Calu3 (cell line): ENCODE measurements at regions of chr7 and their contacts with region 1.

Region 1: DNA sequence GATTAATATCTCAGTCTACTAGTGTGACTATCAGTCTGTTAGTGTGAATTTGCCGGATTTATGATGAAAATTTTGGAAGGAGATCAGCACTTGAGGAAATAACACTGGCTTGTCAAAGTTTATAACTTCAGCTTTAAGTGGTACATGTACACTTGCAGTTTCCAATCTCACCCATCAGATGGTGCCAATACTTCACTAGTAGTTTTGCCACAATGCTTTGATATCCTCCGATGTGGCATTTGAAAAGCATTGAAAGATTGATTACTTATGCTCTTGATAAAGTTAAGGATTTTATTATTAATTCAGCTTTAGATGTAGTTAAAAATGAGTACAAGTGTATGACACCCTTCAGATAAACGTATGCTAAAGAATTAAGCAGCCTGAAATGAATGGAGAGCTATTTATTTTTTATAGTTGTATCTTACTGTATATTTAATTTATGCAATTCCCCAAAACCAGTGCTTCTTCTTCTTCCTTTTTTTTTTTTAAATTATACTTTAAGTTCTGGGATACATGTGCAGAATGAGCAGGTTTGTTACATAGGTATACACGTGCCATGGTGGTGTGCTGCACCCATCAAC is 98.2 kb downstream of the ANLN start:
- DNase-seq: peak; percentile 58
- H3K4me3 Mint-ChIP-seq: no peak overlapping the region
- H3K27ac Mint-ChIP-seq: no peak overlapping the region
- H3K4me1 Mint-ChIP-seq: peaks cover 19% of the 10 kb centered on the region
- H3K27me3 Mint-ChIP-seq: no peaks in the 10 kb centered on the region
- CTCF ChIP-seq: peak; percentile 90

Region 2: GRCh38 chr7:36440880-36441279 is 47.0 kb before region 1 on chr7:
- CTCF ChIA-PET with region 1: interaction called, 4 read pairs
- intact Hi-C with region 1: loop called (anchors 1 kb)
- DNase-seq: no peak
- H3K4me3 Mint-ChIP-seq: no peak overlapping the region
- H3K27ac Mint-ChIP-seq: no peak overlapping the region
- H3K4me1 Mint-ChIP-seq: no peaks in the 10 kb centered on the region
- H3K27me3 Mint-ChIP-seq: no peaks in the 10 kb centered on the region
- CTCF ChIP-seq: no peak

Region 3: DNA sequence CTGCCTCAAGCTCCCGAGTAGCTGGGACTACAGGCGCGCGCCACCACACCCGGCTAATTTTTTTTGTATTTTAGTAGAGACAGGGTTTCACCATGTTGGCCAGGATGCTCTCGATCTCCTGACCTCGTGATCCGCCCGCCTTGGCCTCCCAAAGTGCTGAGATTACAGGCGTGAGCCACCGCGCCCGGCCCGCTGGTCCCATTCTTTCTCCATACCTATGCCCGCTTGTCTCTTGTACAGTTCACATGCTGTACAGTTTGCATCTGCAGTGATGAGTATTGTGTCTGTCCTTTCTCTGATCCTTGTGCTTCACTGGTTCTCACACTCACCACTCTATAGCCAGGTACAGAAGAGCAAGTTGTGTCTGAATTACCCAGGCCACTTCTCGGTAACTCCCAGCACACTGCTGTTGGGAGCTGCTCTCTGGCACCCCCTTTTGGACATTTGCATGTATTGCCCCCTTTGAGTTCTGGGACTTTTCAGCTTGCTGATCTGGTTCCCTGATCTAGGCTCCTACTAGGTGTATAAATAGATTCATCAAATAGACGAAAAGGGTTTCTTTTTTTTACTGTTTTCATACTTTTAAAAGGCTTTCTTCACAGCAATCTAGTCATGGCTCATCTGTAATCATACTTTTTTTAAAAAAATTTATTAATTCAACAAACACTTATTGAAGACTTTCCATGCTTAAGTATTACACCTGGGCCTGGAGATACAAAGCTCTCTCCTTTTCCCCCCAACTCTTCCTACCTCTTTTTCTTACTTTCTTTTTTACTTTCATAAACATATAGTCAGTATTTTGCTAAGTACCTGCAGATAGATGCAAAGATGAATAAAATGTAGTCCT is 183.0 kb after region 1 on chr7:
- CTCF ChIA-PET with region 1: interaction called, 31 read pairs
- intact Hi-C with region 1: loop called (anchors 1 kb)
- DNase-seq: peak; percentile 83
- H3K4me3 Mint-ChIP-seq: no peak overlapping the region
- H3K27ac Mint-ChIP-seq: no peak overlapping the region
- H3K4me1 Mint-ChIP-seq: peaks cover 26% of the 10 kb centered on the region
- H3K27me3 Mint-ChIP-seq: no peaks in the 10 kb centered on the region
- CTCF ChIP-seq: peak; percentile 94

Region 4: GRCh38 chr7:36881233-36881874 is 393.5 kb after region 1 on chr7:
- CTCF ChIA-PET with region 1: no interaction called
- intact Hi-C with region 1: loop called (anchors 5 kb)
- DNase-seq: no peak
- H3K4me3 Mint-ChIP-seq: no peak overlapping the region
- H3K27ac Mint-ChIP-seq: no peak overlapping the region
- H3K4me1 Mint-ChIP-seq: no peaks in the 10 kb centered on the region
- H3K27me3 Mint-ChIP-seq: peaks cover 29% of the 10 kb centered on the region
- CTCF ChIP-seq: no peak

Region 5: GRCh38 chr7:37201003-37201875 is 713.4 kb after region 1 on chr7:
- CTCF ChIA-PET with region 1: interaction called, 8 read pairs
- intact Hi-C with region 1: loop called (anchors 1 kb)
- DNase-seq: peak; percentile 89
- H3K4me3 Mint-ChIP-seq: no peak overlapping the region
- H3K27ac Mint-ChIP-seq: no peak overlapping the region
- H3K4me1 Mint-ChIP-seq: peaks cover 5% of the 10 kb centered on the region
- H3K27me3 Mint-ChIP-seq: peaks cover 33% of the 10 kb centered on the region
- CTCF ChIP-seq: peak; percentile 88